Left ventricle myocardium superior (tissue), 1 donor: ENCODE measurements at regions of chr2 and their contacts with region 1.

Region 1: GRCh38 chr2:36507408-36507812 is 90.6 kb downstream of the FEZ2 start:
- DNase-seq: no peak
- ATAC-seq: peak; percentile 94

Region 2: DNA sequence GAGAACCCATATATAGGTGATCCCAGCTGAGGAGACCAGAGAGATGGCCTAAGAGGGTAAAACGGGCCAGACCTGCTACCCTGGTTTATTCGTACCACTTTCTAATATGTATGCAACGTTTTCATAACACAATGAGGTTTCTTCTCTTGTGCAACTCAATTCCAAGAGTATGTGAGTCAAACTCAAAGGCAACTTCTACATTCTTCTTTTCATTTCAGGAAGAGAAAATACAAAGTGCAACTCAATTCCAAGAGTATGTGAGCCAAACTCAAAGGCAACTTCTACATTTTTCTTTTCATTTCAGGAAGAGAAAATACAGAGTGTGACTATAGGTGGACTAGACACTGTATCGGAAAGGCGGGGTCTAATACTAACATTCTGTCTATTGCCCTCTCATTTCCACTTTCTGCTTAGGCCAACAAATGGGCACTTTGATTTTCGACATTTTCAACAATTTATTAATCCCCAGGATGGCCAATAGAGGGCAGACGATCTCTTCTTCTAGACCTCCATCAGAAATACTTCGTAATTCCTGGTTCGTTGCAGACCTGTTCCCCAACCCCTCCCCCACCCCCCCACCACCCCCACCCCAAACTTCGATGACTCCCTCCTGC is 155.6 kb before region 1 on chr2:
- intact Hi-C with region 1: loop called (anchors 5 kb)
- DNase-seq: no peak
- ATAC-seq: no peak

Region 3: DNA sequence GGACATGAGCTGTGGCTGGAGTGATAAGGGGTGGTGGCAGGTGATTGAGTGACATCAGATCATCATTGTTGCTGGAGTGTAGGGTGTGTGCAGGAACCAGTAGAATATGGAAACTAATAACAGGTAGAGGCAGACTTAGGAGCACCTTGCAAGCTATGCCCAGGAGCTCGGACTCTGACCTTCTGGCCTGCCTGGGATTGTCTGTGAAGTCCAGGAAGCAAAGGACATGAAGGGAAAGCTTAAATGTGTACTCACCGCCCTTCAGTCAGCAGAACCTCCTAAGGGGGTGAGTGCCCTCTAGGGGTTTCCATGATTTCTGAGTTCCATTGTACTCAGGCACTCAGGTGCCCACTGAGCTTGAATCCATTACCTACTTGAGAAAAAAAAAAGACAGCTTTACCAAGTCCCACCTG is 47.7 kb before region 1 on chr2:
- intact Hi-C with region 1: loop called (anchors 10 kb)
- DNase-seq: no peak
- ATAC-seq: peak; percentile 47